Transverse colon (tissue), 4 donors: ENCODE measurements at regions of chr7 and their contacts with region 1.

Region 1: DNA sequence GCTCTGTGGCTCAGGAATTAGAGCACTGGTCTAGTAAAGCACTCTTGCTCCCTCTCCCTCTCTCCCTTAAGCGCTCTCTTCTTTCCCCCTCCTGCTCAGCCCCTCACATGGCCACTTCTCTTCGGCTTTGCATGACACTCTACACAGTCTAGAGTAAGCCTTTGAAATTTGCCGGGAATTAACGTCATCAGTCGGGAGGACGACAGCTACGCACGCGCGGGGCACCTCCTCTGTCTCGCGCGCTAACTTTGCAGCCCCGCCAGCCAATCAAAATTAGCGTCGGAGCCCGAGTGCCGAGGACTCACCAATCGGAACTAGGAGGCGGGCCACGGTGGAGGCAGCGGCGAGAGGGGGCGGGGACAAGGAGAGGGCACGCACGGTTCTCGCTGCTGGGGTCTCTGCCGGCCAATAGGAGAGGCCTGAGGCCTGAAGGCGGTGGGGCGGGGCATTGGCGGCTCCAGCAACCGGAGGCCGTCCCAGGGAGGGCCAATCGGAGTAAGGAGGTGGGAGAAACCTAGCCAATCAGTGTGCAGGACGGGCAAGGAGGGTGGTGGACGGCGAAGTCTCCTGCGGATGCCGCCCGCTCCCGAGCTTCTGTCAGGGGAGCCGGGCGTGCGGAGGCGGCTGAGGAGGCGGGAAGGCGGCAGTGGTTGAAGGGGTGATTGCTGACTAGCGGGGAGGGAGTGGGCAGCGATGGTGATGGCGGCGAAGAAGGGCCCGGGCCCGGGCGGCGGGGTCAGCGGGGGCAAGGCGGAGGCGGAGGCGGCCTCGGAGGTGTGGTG is at the start of gene AGFG2:
- DNase-seq: peak; percentile 100
- H3K4me3 ChIP-seq: peak within 1 kb of the TSS; percentile 58 to 93 (median 72)
- H3K27ac ChIP-seq: peak within 1 kb of the TSS; percentile 76 to 93 (median 89)
- H3K4me1 ChIP-seq: peaks cover 10 to 51% (median 42%) of the 10 kb centered on the region in 4 donors
- H3K27me3 ChIP-seq: no peaks in the 10 kb centered on the region
- CTCF ChIP-seq: no peak
- EP300 ChIP-seq: no peak
- POLR2A ChIP-seq: peak; percentile 96
- total RNA-seq, gene AGFG2: 63.8 to 154 (median 102) TPM

Region 2: DNA sequence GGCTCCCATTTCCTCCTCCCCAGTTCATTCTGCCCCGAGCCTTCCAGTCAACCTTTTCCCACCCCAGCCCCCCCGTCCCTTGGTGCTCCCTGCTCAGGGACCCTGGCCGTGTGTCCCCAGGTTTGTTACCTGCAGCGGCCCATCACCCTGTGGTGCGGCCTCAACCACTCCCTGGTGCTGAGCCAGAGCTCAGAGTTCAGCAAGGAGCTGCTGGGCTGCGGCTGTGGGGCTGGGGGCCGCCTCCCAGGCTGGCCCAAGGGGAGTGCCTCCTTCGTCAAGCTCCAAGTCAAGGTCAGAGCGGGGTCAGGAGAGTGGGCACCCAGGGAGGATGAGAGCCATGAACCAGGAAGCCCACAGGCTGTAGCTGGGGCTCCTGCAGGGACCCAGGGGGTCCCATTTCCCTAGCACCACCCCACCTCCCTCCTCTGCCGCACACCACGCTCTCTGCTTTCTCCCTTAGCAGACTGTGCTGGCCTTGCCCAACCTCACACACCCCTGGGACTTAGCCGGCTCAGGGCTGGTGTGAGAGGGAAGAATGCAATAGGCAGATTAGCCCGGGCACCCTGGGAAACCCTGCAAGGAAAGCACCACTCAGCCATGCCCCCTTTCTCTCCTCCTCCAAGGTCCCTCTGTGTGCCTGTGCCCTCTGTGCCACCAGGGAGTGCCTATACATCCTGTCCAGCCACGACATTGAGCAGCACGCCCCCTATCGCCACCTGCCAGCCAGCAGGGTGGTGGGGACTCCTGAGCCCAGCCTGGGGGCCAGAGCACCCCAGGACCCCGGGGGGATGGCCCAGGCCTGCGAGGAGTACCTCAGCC is 61.3 kb after region 1 on chr7:
- in situ Hi-C with region 1: no loop called
- intact Hi-C with region 1: no loop called
- DNase-seq: no peak
- H3K4me3 ChIP-seq: no peak overlapping the region
- H3K27ac ChIP-seq: no peak overlapping the region
- H3K4me1 ChIP-seq: peaks cover 1 to 19% (median 17%) of the 10 kb centered on the region in 4 donors
- H3K27me3 ChIP-seq: no peaks in the 10 kb centered on the region
- CTCF ChIP-seq: no peak
- EP300 ChIP-seq: no peak
- POLR2A ChIP-seq: no peak

Region 3: GRCh38 chr7:101235050-101235449 is 696.2 kb after region 1 on chr7:
- in situ Hi-C with region 1: no loop called
- intact Hi-C with region 1: loop called (anchors 5 kb)
- DNase-seq: no peak
- H3K4me3 ChIP-seq: no peak overlapping the region
- H3K27ac ChIP-seq: peak overlapping the region; percentile 76 to 85 (median 82)
- H3K4me1 ChIP-seq: peaks cover 4 to 54% (median 37%) of the 10 kb centered on the region in 4 donors
- H3K27me3 ChIP-seq: no peaks in the 10 kb centered on the region
- CTCF ChIP-seq: peak in 3 of 5 experiments; percentile 4 to 40 (median 11)
- EP300 ChIP-seq: no peak
- POLR2A ChIP-seq: no peak